ENCODE measurements at regions of chr4 and their contacts with region 1.

Region 1: DNA sequence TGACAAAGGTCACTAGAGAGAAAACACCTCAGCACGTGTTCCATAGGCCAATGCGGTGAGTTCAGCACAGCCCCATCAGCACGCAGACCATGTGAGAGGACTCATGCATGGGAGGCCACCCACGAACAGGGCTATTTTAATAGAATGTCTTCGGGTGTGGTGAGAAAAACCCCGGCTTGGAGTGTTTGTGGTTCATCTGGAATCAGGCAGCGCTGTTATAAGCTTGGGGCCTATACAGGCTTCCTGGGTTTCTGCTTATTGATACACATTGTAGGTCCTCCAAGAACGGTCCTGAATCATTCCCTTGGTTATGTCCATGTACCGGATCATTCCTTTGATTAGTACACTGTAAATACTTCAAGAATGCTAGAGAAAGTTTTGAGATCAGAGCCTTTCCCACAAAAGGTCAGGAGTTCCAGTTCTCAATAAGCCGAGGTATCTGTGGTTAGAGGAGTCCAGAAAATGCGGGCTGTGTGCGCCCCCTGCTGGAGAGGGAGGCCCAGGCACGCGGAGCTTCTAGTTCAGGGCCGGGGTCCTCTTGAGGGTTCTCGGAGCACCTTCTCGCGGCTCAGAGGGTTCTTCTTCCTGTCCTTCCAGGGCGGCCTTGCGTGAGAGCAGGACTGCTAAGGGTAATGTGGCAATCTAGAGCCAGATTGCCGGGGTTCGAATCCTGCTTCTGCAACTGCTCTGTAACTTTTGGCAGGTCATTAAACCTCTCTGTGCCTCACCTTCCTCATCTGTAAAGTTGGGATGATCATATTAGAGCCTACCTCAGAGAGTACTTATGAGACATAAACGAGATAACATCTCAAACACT is 51.8 kb downstream of the TLR10 start:
- DNase-seq: peak; percentile 58 to 89 (median 77)
- ATAC-seq: peak; percentile 59 to 85
- H3K4me3 Mint-ChIP-seq: no peak overlapping the region
- H3K27ac Mint-ChIP-seq: peak overlapping the region in 1 of 10 donors; percentile 29
- H3K4me1 Mint-ChIP-seq: peaks cover 0 to 24% (median 15%) of the 10 kb centered on the region in 4 donors
- H3K27me3 Mint-ChIP-seq: peaks cover 0 to 1% (median 0%) of the 10 kb centered on the region in 5 donors

Region 2: DNA sequence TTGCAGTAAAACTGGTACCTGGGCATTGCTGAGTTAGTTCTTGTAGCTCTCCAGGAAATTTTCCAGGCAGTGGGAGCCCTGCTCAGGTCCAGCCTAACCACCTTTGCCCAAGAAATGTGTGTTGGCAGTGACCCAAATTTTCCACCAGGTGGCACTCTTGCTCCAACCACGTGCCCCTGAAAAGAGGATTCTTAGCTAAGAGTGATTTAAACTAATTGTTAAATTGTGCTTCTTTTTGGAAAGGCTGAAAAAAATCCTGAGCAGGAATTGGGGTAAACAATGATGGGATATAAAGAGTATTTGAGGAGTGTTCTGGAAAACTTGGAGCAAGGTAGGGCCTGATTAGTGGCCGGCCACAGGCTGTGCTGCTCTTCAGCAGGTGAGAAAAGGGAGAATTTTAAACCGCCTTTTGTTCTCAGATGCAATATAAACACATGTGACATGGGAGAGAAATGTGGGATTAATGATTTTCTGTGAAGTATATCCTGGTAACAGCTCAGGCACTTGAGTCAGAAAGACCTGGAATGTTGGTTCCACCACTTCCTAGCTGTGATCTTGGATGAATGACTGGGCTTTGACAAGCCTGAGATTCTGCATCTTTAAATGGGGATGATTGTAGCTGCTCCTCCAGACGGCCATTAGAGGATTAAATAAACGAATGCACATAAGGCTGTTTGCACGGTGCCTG is 551.2 kb before region 1 on chr4:
- POLR2A ChIA-PET with region 1: interaction called, 12 read pairs
- DNase-seq: peak; percentile 41 to 88 (median 71)
- ATAC-seq: peak; percentile 42 to 59
- H3K4me3 Mint-ChIP-seq: no peak overlapping the region
- H3K27ac Mint-ChIP-seq: peak overlapping the region in 2 of 10 donors; percentile 7 to 43
- H3K4me1 Mint-ChIP-seq: peaks cover 29 to 46% (median 42%) of the 10 kb centered on the region in 4 donors
- H3K27me3 Mint-ChIP-seq: no peaks in the 10 kb centered on the region

Measured in naive thymus-derived CD8-positive, alpha-beta T cell (primary cell).